ENCODE measurements at regions of chr9 and their contacts with region 1.

Region 1: GRCh38 chr9:72592502-72593403 is 71.3 kb downstream of the TMC1 start:
- DNase-seq: peak in 2 of 6 donors; percentile 30 to 46
- ATAC-seq: peak; percentile 89 to 97 (median 95)
- H3K4me3 ChIP-seq: no peak overlapping the region
- H3K27ac ChIP-seq: no peak overlapping the region
- H3K4me1 ChIP-seq: peaks cover 0 to 5% (median 0%) of the 10 kb centered on the region in 3 donors
- H3K27me3 ChIP-seq: no peaks in the 10 kb centered on the region
- CTCF ChIP-seq: peak; percentile 75 to 89 (median 84)

Region 2: GRCh38 chr9:72292256-72292682 is 300.5 kb before region 1 on chr9:
- intact Hi-C with region 1: loop called in 2 of 3 experiments (anchors 5 kb)
- DNase-seq: no peak
- ATAC-seq: peak in 3 of 4 donors; percentile 61 to 68 (median 65)
- H3K4me3 ChIP-seq: no peak overlapping the region
- H3K27ac ChIP-seq: peak overlapping the region in 2 of 4 donors; percentile 14 to 27
- H3K4me1 ChIP-seq: peaks cover 0 to 31% (median 11%) of the 10 kb centered on the region in 3 donors
- H3K27me3 ChIP-seq: no peaks in the 10 kb centered on the region
- CTCF ChIP-seq: peak; percentile 22 to 48 (median 30)

Region 3: GRCh38 chr9:72441848-72442607 is 150.7 kb before region 1 on chr9:
- intact Hi-C with region 1: no loop called
- DNase-seq: no peak
- ATAC-seq: no peak
- H3K4me3 ChIP-seq: no peak overlapping the region
- H3K27ac ChIP-seq: no peak overlapping the region
- H3K4me1 ChIP-seq: no peaks in the 10 kb centered on the region
- H3K27me3 ChIP-seq: no peaks in the 10 kb centered on the region
- CTCF ChIP-seq: no peak

Region 4: DNA sequence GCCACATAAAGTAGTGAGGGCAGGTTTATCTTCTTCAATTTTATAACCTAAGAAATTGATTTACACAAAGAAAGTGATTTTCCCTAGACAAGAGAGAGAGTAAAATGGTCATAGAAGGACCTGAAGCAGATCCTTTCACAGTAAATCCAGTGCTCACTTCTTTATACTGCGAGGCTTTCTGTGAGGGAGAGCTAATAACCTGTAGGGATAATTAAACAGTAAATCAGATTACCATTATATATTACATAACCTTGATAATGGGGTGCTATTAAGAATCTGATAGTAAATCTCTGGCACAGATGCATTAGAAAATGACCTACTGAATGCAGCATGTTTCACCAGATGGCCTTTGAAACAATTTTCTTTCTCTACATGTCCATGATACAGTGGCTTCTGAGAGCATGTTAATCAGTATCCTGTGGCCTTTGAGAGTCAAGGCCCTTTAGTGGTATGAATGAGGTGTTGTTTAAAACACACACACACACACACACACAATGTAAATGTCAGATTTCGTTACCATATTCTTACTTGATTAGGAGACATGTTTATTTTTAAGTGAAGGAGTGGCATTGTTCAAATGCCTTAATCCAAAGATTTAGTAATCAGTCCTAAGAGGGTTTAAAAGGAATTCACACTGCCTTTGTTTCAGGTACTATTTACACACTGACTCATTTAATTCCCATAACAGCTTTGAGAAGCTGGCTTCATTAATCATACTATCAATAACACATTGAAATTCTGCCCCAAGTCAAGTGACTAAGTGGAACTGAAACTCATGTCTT is 235.4 kb after region 1 on chr9:
- intact Hi-C with region 1: loop called in 1 of 3 experiments (anchors 10 kb)
- DNase-seq: peak in 1 of 6 donors; percentile 19
- ATAC-seq: peak; percentile 89 to 93 (median 92)
- H3K4me3 ChIP-seq: no peak overlapping the region
- H3K27ac ChIP-seq: peak overlapping the region in 2 of 4 donors; percentile 71 to 80
- H3K4me1 ChIP-seq: peaks cover 7 to 21% (median 18%) of the 10 kb centered on the region in 3 donors
- H3K27me3 ChIP-seq: no peaks in the 10 kb centered on the region
- CTCF ChIP-seq: no peak

Measured in pancreas (tissue), 10 donors.